ENCODE measurements at regions of chr19 and their contacts with region 1.

Region 1: GRCh38 chr19:49097455-49098288 is 12.4 kb downstream of the SNRNP70 start:
- DNase-seq: peak; percentile 88
- ATAC-seq: peak; percentile 98
- H3K4me3 ChIP-seq: no peak overlapping the region
- H3K27ac ChIP-seq: peak overlapping the region; percentile 36
- H3K4me1 ChIP-seq: peaks cover 8% of the 10 kb centered on the region
- H3K27me3 ChIP-seq: no peaks in the 10 kb centered on the region
- CTCF ChIP-seq: peak; percentile 94

Region 2: GRCh38 chr19:49113762-49114629 is 16.3 kb after region 1 on chr19 and contains the start of gene LIN7B:
- CTCF ChIA-PET with region 1: interaction called, 15 read pairs
- POLR2A ChIA-PET with region 1: no interaction called
- intact Hi-C with region 1: no loop called
- DNase-seq: peak; percentile 73
- ATAC-seq: peak; percentile 64
- H3K4me3 ChIP-seq: peak within 1 kb of the TSS; percentile 75
- H3K27ac ChIP-seq: no peak within 1 kb of the TSS
- H3K4me1 ChIP-seq: peaks cover 10% of the 10 kb centered on the region; the same call in 1 of the 2 replicates
- H3K27me3 ChIP-seq: no peaks in the 10 kb centered on the region
- CTCF ChIP-seq: peak; percentile 37
- total RNA-seq, gene LIN7B: 5.8 and 11.6 TPM in 2 replicates

Region 3: DNA sequence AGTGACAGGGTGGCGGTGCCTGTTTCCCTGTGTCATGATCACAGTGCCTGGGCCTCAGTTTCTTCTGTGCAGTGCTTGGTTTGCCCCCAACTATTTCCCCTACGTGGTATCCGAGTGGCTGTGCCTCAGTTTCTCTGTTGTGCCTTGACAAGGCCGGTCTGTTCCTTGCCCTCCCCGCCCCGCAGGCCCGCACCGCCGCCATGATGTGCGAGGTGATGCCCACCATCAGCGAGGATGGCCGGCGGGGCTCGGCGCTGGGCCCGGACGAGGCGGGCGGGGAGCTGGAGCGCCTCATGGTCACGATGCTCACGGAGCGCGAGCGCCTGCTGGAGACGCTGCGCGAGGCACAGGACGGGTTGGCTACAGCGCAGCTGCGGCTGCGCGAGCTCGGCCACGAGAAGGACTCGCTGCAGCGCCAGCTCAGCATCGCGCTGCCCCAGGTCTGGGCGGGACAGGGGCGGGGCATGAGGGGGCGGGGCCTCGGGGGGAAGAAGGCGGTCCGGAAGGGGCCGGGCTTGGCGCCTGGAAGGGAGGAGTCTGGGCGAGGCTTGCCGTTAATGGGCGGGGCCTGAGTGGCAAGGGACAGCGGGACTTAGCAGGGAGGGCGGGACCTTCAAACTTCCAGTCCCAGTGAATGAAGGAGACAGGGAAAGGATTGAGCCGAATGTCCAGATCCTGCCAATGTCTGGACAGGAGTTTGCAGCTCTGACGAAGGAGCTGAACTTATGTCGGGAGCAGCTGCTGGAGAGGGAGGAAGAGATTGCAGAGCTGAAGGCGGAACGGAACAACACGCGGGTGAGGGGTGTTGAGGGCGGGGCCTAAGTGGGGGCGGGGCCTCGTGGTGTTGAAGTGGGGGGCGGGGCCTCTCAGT is 30.2 kb after region 1 on chr19:
- CTCF ChIA-PET with region 1: interaction called, 16 read pairs
- POLR2A ChIA-PET with region 1: no interaction called
- intact Hi-C with region 1: no loop called
- DNase-seq: peak; percentile 90
- ATAC-seq: peak; percentile 94
- H3K4me3 ChIP-seq: peak overlapping the region; percentile 59
- H3K27ac ChIP-seq: no peak overlapping the region
- H3K4me1 ChIP-seq: no peaks in the 10 kb centered on the region; the same call in none of the 2 replicates
- H3K27me3 ChIP-seq: no peaks in the 10 kb centered on the region
- CTCF ChIP-seq: no peak

Region 4: DNA sequence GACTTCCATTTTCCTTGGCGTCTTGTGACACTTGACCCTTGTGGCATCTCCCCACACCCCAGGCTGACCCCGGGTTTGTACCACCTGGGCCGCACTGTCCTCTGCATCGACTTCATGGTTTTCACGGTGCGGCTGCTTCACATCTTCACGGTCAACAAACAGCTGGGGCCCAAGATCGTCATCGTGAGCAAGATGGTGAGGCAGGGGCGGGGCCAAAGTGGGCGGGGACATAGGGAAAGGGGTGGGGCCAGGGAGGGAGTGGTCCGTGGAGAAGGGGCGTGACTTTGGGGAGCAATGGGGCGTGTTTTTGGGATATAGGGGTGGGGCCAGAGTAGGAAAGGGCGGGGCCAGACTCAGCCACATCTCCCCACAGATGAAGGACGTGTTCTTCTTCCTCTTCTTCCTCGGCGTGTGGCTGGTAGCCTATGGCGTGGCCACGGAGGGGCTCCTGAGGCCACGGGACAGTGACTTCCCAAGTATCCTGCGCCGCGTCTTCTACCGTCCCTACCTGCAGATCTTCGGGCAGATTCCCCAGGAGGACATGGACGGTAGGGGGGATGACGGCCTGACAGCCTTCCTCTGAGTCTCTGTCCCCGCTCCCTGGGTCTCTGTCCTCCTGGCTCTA is 102.7 kb after region 1 on chr19:
- CTCF ChIA-PET with region 1: interaction called, 12 read pairs
- POLR2A ChIA-PET with region 1: no interaction called
- intact Hi-C with region 1: loop called (anchors 5 kb)
- DNase-seq: peak; percentile 40
- ATAC-seq: no peak
- H3K4me3 ChIP-seq: no peak overlapping the region
- H3K27ac ChIP-seq: no peak overlapping the region
- H3K4me1 ChIP-seq: peaks cover 19% of the 10 kb centered on the region
- H3K27me3 ChIP-seq: no peaks in the 10 kb centered on the region
- CTCF ChIP-seq: no peak

Region 5: DNA sequence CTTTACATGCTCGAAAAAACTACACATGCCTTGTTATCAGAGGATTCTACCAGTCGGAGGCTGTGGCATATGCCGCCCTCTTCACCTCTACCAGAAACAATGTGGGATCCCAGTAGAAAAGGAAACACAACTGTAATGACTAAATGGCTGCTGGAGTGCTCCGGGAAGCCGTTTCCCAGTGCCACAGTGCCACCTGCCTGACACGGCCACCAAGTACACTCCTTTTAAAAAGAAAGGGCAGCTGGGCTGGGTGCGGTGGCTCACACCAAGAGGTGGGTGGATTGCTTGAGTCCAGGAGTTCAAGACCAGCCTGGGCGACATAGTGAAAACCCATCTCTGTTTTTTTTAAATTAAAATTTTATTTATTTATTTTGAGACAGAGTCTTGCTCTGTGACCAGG is 127.2 kb after region 1 on chr19:
- CTCF ChIA-PET with region 1: interaction called, 13 read pairs
- POLR2A ChIA-PET with region 1: no interaction called
- intact Hi-C with region 1: no loop called
- DNase-seq: peak; percentile 88
- ATAC-seq: peak; percentile 95
- H3K4me3 ChIP-seq: peak overlapping the region; percentile 31; the same call in 1 of the 2 replicates
- H3K27ac ChIP-seq: no peak overlapping the region
- H3K4me1 ChIP-seq: no peaks in the 10 kb centered on the region
- H3K27me3 ChIP-seq: no peaks in the 10 kb centered on the region
- CTCF ChIP-seq: peak; percentile 90